ENCODE measurements at regions of chr6 and their contacts with region 1.

Region 1: GRCh38 chr6:85449818-85450759 is at the start of gene NT5E:
- DNase-seq: peak in 5 of 9 donors; percentile 17 to 67 (median 30)
- ATAC-seq: peak; percentile 68
- H3K4me3 ChIP-seq: peak within 1 kb of the TSS; percentile 50
- H3K4me3 Mint-ChIP-seq: peak within 1 kb of the TSS; percentile 82 to 98 (median 89)
- H3K27ac ChIP-seq: no peak within 1 kb of the TSS
- H3K27ac Mint-ChIP-seq: peak within 1 kb of the TSS in 8 of 9 donors; percentile 10 to 95 (median 58)
- H3K4me1 ChIP-seq: peaks cover 0 to 9% of the 10 kb centered on the region in 2 donors
- H3K4me1 Mint-ChIP-seq: peaks cover 20 to 65% (median 46%) of the 10 kb centered on the region in 7 donors
- H3K27me3 ChIP-seq: peaks cover 0 to 15% of the 10 kb centered on the region in 2 donors
- H3K27me3 Mint-ChIP-seq: peaks cover 30 to 77% (median 63%) of the 10 kb centered on the region in 5 donors
- total RNA-seq, gene NT5E: 1.5 to 29.3 (median 2.8) TPM

Region 2: DNA sequence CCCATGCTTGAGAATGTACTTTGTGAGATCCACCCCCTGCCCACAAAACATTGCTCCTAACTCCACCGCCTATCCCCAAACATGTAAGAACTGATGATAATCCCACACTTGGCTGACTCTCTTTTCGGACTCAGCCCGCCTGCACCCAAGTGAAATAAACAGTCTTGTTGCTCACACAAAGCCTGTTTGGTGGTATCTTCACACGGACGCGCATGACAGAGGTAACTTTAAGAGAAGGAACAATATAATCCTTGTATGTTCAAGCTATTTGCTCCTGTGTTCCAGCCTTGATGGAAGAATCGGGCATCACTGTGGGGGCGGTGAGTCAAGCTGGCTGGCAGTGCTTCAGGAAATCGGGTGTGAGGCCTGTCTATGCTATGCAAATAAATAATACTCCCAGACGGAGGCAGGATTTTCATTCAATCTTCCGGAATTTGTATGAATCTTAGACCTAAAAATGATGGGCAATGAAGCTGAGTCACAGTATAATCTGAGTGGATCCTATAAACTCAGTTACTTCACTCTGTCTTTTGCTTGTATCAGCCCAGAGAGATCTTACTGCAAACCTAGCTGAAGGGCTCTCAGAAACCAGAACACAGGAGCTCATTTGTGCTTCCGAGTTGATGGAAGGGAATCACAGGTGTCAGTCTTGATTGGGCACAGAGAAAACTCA is 45.5 kb before region 1 on chr6:
- CTCF ChIA-PET with region 1: no interaction called
- POLR2A ChIA-PET with region 1: no interaction called
- intact Hi-C with region 1: loop called in 1 of 2 experiments (anchors 1 kb)
- DNase-seq: no peak
- ATAC-seq: no peak
- H3K4me3 ChIP-seq: no peak overlapping the region
- H3K4me3 Mint-ChIP-seq: peak overlapping the region in 2 of 10 donors; percentile 1 to 68
- H3K27ac ChIP-seq: no peak overlapping the region
- H3K27ac Mint-ChIP-seq: peak overlapping the region in 4 of 9 donors; percentile 11 to 83 (median 43)
- H3K4me1 ChIP-seq: no peaks in the 10 kb centered on the region
- H3K4me1 Mint-ChIP-seq: peaks cover 0 to 62% (median 7%) of the 10 kb centered on the region in 7 donors
- H3K27me3 ChIP-seq: no peaks in the 10 kb centered on the region
- H3K27me3 Mint-ChIP-seq: peaks cover 0 to 9% (median 4%) of the 10 kb centered on the region in 5 donors

Region 3: GRCh38 chr6:85460921-85461797 is 11.1 kb after region 1 on chr6:
- CTCF ChIA-PET with region 1: no interaction called
- POLR2A ChIA-PET with region 1: interaction called, 8 read pairs
- intact Hi-C with region 1: loop called (anchors 1 kb)
- DNase-seq: peak in 6 of 9 donors; percentile 17 to 53 (median 46)
- ATAC-seq: peak; percentile 54
- H3K4me3 ChIP-seq: no peak overlapping the region
- H3K4me3 Mint-ChIP-seq: peak overlapping the region in 7 of 10 donors; percentile 32 to 72 (median 68)
- H3K27ac ChIP-seq: no peak overlapping the region
- H3K27ac Mint-ChIP-seq: peak overlapping the region in 8 of 9 donors; percentile 38 to 92 (median 71)
- H3K4me1 ChIP-seq: peaks cover 9 to 25% of the 10 kb centered on the region in 2 donors
- H3K4me1 Mint-ChIP-seq: peaks cover 23 to 95% (median 63%) of the 10 kb centered on the region in 7 donors
- H3K27me3 ChIP-seq: no peaks in the 10 kb centered on the region
- H3K27me3 Mint-ChIP-seq: peaks cover 0 to 30% (median 28%) of the 10 kb centered on the region in 5 donors

Region 4: DNA sequence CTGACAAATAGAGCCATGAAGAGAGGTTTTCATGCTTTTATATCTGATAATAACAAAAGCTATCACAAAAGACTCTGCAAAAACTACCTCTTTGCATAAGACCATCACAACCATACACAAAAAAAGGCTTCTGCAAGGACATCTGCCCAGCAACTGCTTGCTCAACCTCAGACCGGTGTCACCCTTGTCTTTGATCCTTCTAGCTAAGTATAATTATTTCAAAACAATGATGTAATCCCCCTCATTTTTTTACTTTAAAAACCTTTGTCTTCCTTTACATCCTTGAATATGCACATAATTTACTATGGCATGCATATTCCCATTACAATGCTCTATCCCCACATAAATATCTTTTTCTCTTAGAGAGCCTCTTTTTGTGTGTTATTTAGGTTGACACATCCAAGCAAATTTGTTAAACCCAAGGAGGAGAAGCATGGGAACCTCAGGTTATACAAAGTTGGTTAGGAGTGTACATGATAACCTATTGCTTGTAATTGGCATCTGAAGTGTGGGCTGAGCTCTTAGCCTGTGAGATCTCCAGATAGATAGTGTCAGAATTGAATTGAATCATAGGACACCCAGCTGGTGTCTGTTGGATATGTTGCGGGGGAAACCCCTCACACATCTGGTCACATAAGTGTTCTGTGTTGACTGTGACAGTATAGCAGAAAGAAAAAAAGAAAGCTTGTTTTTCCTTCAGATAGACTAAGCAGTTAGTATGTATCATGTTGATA is 1665.5 kb after region 1 on chr6:
- CTCF ChIA-PET with region 1: no interaction called
- POLR2A ChIA-PET with region 1: no interaction called
- intact Hi-C with region 1: no loop called
- DNase-seq: no peak
- ATAC-seq: no peak
- H3K4me3 ChIP-seq: no peak overlapping the region
- H3K4me3 Mint-ChIP-seq: no peak overlapping the region
- H3K27ac ChIP-seq: no peak overlapping the region
- H3K27ac Mint-ChIP-seq: no peak overlapping the region
- H3K4me1 ChIP-seq: no peaks in the 10 kb centered on the region
- H3K4me1 Mint-ChIP-seq: no peaks in the 10 kb centered on the region
- H3K27me3 ChIP-seq: no peaks in the 10 kb centered on the region
- H3K27me3 Mint-ChIP-seq: peaks cover 3 to 52% (median 22%) of the 10 kb centered on the region in 5 donors